Gastrocnemius medialis (tissue), 4 donors: ENCODE measurements at regions of chr11 and their contacts with region 1.

Region 1: GRCh38 chr11:27209562-27210005 is 153.4 kb downstream of the CCDC34 start:
- DNase-seq: no peak
- ATAC-seq: peak; percentile 42 to 61
- H3K4me3 ChIP-seq: no peak overlapping the region
- H3K27ac ChIP-seq: peak overlapping the region in 2 of 4 donors; percentile 13 to 43
- H3K4me1 ChIP-seq: peaks cover 15 to 24% of the 10 kb centered on the region in 2 donors
- H3K27me3 ChIP-seq: no peaks in the 10 kb centered on the region
- CTCF ChIP-seq: no peak
- POLR2A ChIP-seq: no peak

Region 2: GRCh38 chr11:27116684-27117083 is 92.9 kb before region 1 on chr11:
- in situ Hi-C with region 1: no loop called
- intact Hi-C with region 1: no loop called
- DNase-seq: no peak
- ATAC-seq: no peak
- H3K4me3 ChIP-seq: no peak overlapping the region
- H3K27ac ChIP-seq: no peak overlapping the region
- H3K4me1 ChIP-seq: no peaks in the 10 kb centered on the region
- H3K27me3 ChIP-seq: no peaks in the 10 kb centered on the region
- CTCF ChIP-seq: no peak
- POLR2A ChIP-seq: no peak

Region 3: GRCh38 chr11:27277843-27278242 is 68.3 kb after region 1 on chr11:
- in situ Hi-C with region 1: loop called in 1 of 4 experiments (anchors 10 kb)
- intact Hi-C with region 1: no loop called
- DNase-seq: no peak
- ATAC-seq: no peak
- H3K4me3 ChIP-seq: no peak overlapping the region
- H3K27ac ChIP-seq: no peak overlapping the region
- H3K4me1 ChIP-seq: peaks cover 0 to 8% of the 10 kb centered on the region in 2 donors
- H3K27me3 ChIP-seq: no peaks in the 10 kb centered on the region
- CTCF ChIP-seq: no peak
- POLR2A ChIP-seq: no peak